ENCODE measurements at regions of chr1 and their contacts with region 1.

Region 1: DNA sequence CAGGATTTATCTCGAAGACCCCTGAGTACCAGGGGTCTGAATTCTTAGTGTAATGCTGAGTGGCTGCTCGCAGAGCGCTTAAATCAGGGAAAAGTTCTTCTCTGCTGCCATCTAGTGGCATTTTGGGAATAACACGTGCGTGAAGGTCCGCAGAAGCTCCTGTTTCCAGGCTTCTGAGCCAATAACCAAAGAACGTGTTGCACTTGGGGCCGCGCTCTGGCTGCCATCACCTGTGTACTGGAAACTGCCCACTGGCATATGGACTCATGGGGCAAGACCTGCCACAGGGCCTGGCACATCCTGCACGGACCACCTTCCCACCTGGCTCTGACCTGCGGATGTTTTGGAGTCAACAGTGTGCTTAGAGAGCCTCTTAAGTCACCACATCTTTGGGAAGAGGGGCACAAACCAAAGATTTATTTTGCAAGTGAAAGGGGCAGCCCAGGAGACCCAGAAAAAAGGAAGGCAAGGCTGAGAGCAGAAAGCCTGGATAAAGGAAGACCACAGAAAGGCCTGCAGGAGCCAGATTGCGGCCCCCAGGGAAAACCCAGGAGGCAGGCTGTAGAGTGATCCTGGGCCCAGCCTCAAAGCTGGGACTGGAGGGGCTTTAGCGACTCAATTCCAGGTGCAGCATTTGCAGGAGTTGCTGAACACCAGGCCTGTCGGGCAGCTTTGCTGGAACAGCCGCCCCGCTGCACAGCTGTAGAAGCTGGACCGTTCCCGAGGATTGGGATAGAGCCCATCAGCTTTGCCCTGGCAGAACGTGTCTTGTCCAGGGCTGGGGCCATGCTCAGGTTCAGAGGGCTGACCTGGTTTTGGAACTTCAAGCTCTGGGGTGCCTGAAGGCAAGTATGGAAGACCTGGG is 13.0 kb downstream of the CHIT1 start:
- DNase-seq: peak; percentile 9 to 72 (median 55)
- ATAC-seq: peak; percentile 58
- H3K4me3 ChIP-seq: no peak overlapping the region
- H3K4me3 Mint-ChIP-seq: no peak overlapping the region
- H3K27ac ChIP-seq: no peak overlapping the region
- H3K27ac Mint-ChIP-seq: no peak overlapping the region
- H3K4me1 ChIP-seq: no peaks in the 10 kb centered on the region
- H3K4me1 Mint-ChIP-seq: no peaks in the 10 kb centered on the region
- H3K27me3 ChIP-seq: peaks cover 0 to 3% of the 10 kb centered on the region in 2 experiments
- H3K27me3 Mint-ChIP-seq: peaks cover 20% of the 10 kb centered on the region
- CTCF ChIP-seq: peak; percentile 71

Region 2: DNA sequence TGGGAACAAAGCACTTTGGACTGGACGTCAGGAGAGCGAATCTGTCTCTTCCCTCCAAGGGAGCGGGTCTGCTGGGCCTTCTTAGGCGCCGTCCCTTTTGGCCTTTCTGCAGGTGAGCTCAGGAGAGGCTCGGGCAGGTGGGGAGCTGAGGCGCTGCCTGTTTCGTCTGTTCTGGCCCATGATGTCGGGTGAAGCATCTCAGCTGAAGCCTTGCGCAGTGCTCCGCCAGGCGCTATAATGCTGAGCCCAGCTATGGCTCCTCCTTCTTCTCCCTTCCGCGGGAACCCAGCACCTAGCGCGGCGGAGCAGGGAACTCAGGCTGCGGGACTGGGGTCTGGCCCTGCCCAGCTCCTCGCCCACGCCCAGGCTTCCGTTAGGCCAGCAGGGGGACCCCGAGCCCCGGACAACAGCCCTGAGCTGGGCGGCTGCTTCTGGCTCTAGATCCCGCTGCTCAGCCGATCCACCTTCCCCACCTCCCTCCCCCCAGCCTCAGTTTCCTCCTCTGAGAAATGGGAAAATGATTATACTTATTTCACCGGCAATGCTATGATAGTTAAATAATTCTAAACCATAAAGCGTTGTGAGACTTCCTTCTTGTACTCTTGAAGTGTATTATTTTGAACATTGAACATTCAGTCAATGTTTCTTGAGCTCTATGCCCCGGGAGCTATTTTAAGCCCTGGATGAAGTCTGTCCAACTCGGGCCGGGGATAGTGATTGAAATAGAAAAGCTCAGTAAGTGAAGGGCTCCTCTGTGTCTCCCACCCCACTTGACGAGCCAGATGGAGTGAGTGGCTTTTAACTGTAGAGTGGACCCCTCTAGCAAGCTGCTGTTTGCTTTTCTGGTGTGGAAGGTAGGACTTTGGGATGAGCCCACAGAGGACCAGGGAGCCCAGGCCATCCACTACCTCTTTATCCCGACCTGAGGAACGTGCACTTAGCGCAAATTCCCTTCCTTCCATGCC is 98.6 kb before region 1 on chr1:
- CTCF ChIA-PET with region 1: interaction called, 5 read pairs
- POLR2A ChIA-PET with region 1: no interaction called
- intact Hi-C with region 1: loop called in 1 of 2 experiments (anchors 5 kb)
- DNase-seq: peak in 5 of 9 experiments; percentile 13 to 48 (median 18)
- ATAC-seq: no peak
- H3K4me3 ChIP-seq: no peak overlapping the region
- H3K4me3 Mint-ChIP-seq: no peak overlapping the region
- H3K27ac ChIP-seq: no peak overlapping the region
- H3K27ac Mint-ChIP-seq: no peak overlapping the region
- H3K4me1 ChIP-seq: no peaks in the 10 kb centered on the region
- H3K4me1 Mint-ChIP-seq: peaks cover 2% of the 10 kb centered on the region
- H3K27me3 ChIP-seq: peaks cover 0 to 3% of the 10 kb centered on the region in 2 experiments
- H3K27me3 Mint-ChIP-seq: peaks cover 50% of the 10 kb centered on the region
- CTCF ChIP-seq: no peak

Region 3: GRCh38 chr1:203202431-203203245 is 13.9 kb before region 1 on chr1:
- CTCF ChIA-PET with region 1: interaction called, 26 read pairs
- POLR2A ChIA-PET with region 1: no interaction called
- intact Hi-C with region 1: no loop called
- DNase-seq: no peak
- ATAC-seq: no peak
- H3K4me3 ChIP-seq: no peak overlapping the region
- H3K4me3 Mint-ChIP-seq: no peak overlapping the region
- H3K27ac ChIP-seq: no peak overlapping the region
- H3K27ac Mint-ChIP-seq: no peak overlapping the region
- H3K4me1 ChIP-seq: no peaks in the 10 kb centered on the region
- H3K4me1 Mint-ChIP-seq: no peaks in the 10 kb centered on the region
- H3K27me3 ChIP-seq: peaks cover 0 to 3% of the 10 kb centered on the region in 2 experiments
- H3K27me3 Mint-ChIP-seq: peaks cover 11% of the 10 kb centered on the region
- CTCF ChIP-seq: no peak

Measured in CD8-positive, alpha-beta T cell (primary cell).